ENCODE measurements at regions of chr22 and their contacts with region 1.

Region 1: DNA sequence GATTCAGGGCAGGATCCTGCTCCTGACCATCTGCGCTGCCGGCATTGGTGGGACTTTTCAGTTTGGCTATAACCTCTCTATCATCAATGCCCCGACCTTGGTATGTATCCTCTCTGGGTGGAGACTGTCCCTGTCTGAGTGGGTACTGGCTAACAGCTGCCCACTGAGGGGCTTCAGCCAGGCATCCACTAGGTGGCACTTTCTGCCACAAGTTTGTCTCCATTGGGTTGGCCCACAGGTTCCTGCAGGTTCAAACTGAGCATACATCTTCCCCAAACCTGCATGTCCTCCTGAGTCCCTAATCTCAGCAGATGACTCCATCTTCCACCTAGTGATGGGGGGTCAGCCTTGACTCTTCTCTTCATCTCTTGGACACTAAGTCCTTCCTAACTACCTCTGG is 4.4 kb downstream of the SLC2A11 start:
- DNase-seq: no peak
- H3K4me3 ChIP-seq: no peak overlapping the region
- H3K27ac ChIP-seq: no peak overlapping the region
- H3K4me1 ChIP-seq: peaks cover 0 to 15% (median 9%) of the 10 kb centered on the region in 4 donors
- H3K27me3 ChIP-seq: no peaks in the 10 kb centered on the region
- CTCF ChIP-seq: peak in 2 of 5 experiments; percentile 41 to 42
- EP300 ChIP-seq: no peak
- POLR2A ChIP-seq: no peak

Region 2: GRCh38 chr22:23838681-23839468 is 23.2 kb before region 1 on chr22 and contains the start of gene DERL3:
- in situ Hi-C with region 1: no loop called
- intact Hi-C with region 1: loop called (anchors 2 kb)
- DNase-seq: peak; percentile 99
- H3K4me3 ChIP-seq: peak within 1 kb of the TSS in 3 of 4 donors; percentile 31 to 57 (median 33)
- H3K27ac ChIP-seq: peak within 1 kb of the TSS; percentile 7 to 69 (median 40)
- H3K4me1 ChIP-seq: peaks cover 13 to 18% (median 16%) of the 10 kb centered on the region in 4 donors
- H3K27me3 ChIP-seq: no peaks in the 10 kb centered on the region
- CTCF ChIP-seq: no peak
- EP300 ChIP-seq: no peak
- POLR2A ChIP-seq: no peak
- total RNA-seq, gene DERL3: 1.9 to 20.0 (median 3.1) TPM

Measured in transverse colon (tissue), 4 donors.